CD4-positive, alpha-beta memory T cell (primary cell): ENCODE measurements at regions of chr1 and their contacts with region 1.

Region 1: GRCh38 chr1:165597883-165598675 is 33.0 kb upstream of the MGST3 start:
- DNase-seq: peak; percentile 84 to 91 (median 86)
- H3K4me3 ChIP-seq: peak overlapping the region; percentile 59 to 71
- H3K4me3 Mint-ChIP-seq: peak overlapping the region; percentile 88 to 92 (median 90)
- H3K27ac ChIP-seq: peak overlapping the region; percentile 7
- H3K27ac Mint-ChIP-seq: peak overlapping the region; percentile 80 to 95 (median 91)
- H3K4me1 ChIP-seq: peaks cover 18% of the 10 kb centered on the region
- H3K4me1 Mint-ChIP-seq: peaks cover 18 to 30% (median 24%) of the 10 kb centered on the region in 4 donors
- H3K27me3 ChIP-seq: peaks cover 22% of the 10 kb centered on the region
- H3K27me3 Mint-ChIP-seq: peaks cover 17 to 30% of the 10 kb centered on the region in 2 donors

Region 2: GRCh38 chr1:165218731-165219130 is 379.3 kb before region 1 on chr1:
- CTCF ChIA-PET with region 1: no interaction called
- POLR2A ChIA-PET with region 1: no interaction called
- intact Hi-C with region 1: no loop called
- DNase-seq: no peak
- H3K4me3 ChIP-seq: no peak overlapping the region
- H3K4me3 Mint-ChIP-seq: no peak overlapping the region
- H3K27ac ChIP-seq: no peak overlapping the region
- H3K27ac Mint-ChIP-seq: no peak overlapping the region
- H3K4me1 ChIP-seq: no peaks in the 10 kb centered on the region
- H3K4me1 Mint-ChIP-seq: no peaks in the 10 kb centered on the region
- H3K27me3 ChIP-seq: peaks cover 6% of the 10 kb centered on the region
- H3K27me3 Mint-ChIP-seq: peaks cover 6 to 7% of the 10 kb centered on the region in 2 donors

Region 3: GRCh38 chr1:165367375-165367993 is 230.6 kb before region 1 on chr1:
- CTCF ChIA-PET with region 1: interaction called, 115 read pairs
- POLR2A ChIA-PET with region 1: interaction called, 3 read pairs
- intact Hi-C with region 1: loop called (anchors 1 kb)
- DNase-seq: peak; percentile 57 to 70 (median 63)
- H3K4me3 ChIP-seq: no peak overlapping the region
- H3K4me3 Mint-ChIP-seq: no peak overlapping the region
- H3K27ac ChIP-seq: no peak overlapping the region
- H3K27ac Mint-ChIP-seq: no peak overlapping the region
- H3K4me1 ChIP-seq: no peaks in the 10 kb centered on the region
- H3K4me1 Mint-ChIP-seq: peaks cover 0 to 10% (median 2%) of the 10 kb centered on the region in 4 donors
- H3K27me3 ChIP-seq: peaks cover 4% of the 10 kb centered on the region
- H3K27me3 Mint-ChIP-seq: peaks cover 38 to 48% of the 10 kb centered on the region in 2 donors

Region 4: DNA sequence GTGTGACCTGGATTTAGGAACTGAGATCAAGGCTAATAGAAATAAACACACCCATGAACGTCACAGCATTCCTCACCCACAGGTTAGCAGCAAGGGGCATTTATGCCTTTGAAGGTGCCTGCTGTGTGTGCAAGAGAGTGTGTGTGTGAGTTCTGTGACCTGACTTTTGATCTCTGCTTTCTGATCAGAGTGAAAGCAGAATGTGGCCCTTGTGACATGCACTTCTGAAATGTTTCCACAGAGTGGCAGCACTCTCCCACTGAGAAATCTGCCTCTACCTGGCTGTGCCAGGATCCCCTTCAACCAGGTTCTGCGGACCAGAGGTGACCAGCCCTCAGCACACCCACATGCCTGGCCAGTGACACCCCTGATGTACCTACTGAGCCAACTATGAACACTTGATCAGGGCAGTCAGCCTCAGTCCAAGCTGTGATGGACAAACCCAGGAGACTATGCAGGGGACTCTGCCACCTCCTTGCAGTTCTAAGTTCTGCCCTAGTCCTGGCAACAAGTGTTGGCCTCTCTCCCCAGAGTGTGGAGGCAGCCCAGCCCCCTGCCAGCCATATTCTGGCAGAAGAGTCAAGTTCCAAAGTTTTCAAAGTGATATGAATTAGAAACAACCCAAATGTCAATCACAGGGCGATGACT is 194.1 kb before region 1 on chr1:
- CTCF ChIA-PET with region 1: interaction called, 21 read pairs
- POLR2A ChIA-PET with region 1: interaction called, 7 read pairs
- intact Hi-C with region 1: no loop called
- DNase-seq: peak in 3 of 5 donors; percentile 26 to 33 (median 30)
- H3K4me3 ChIP-seq: no peak overlapping the region
- H3K4me3 Mint-ChIP-seq: no peak overlapping the region
- H3K27ac ChIP-seq: no peak overlapping the region
- H3K27ac Mint-ChIP-seq: no peak overlapping the region
- H3K4me1 ChIP-seq: no peaks in the 10 kb centered on the region
- H3K4me1 Mint-ChIP-seq: peaks cover 0 to 5% (median 2%) of the 10 kb centered on the region in 4 donors
- H3K27me3 ChIP-seq: no peaks in the 10 kb centered on the region
- H3K27me3 Mint-ChIP-seq: peaks cover 15 to 17% of the 10 kb centered on the region in 2 donors

Region 5: DNA sequence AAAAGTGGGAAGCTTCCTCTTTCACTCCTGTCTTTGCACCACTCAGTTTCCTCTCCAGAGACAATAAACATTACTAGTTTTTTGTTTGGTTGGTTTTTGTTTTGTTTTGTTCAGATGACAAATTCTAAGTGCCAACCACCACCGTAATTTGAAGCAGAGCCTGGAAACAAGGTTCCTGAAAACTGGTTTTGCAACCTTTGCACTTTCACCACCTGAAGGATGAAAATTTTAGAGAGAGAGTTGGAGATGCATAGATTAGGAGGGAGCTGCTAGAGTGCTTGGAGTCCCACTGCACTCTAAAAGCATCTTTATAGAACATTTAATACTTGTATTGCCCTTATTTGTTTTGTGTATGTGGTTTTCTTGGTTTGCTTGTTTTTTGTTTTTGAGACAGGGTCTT is 12.8 kb after region 1 on chr1:
- CTCF ChIA-PET with region 1: interaction called, 13 read pairs
- POLR2A ChIA-PET with region 1: no interaction called
- intact Hi-C with region 1: no loop called
- DNase-seq: no peak
- H3K4me3 ChIP-seq: no peak overlapping the region
- H3K4me3 Mint-ChIP-seq: no peak overlapping the region
- H3K27ac ChIP-seq: no peak overlapping the region
- H3K27ac Mint-ChIP-seq: no peak overlapping the region
- H3K4me1 ChIP-seq: no peaks in the 10 kb centered on the region
- H3K4me1 Mint-ChIP-seq: no peaks in the 10 kb centered on the region
- H3K27me3 ChIP-seq: no peaks in the 10 kb centered on the region
- H3K27me3 Mint-ChIP-seq: peaks cover 22 to 23% of the 10 kb centered on the region in 2 donors

Region 6: DNA sequence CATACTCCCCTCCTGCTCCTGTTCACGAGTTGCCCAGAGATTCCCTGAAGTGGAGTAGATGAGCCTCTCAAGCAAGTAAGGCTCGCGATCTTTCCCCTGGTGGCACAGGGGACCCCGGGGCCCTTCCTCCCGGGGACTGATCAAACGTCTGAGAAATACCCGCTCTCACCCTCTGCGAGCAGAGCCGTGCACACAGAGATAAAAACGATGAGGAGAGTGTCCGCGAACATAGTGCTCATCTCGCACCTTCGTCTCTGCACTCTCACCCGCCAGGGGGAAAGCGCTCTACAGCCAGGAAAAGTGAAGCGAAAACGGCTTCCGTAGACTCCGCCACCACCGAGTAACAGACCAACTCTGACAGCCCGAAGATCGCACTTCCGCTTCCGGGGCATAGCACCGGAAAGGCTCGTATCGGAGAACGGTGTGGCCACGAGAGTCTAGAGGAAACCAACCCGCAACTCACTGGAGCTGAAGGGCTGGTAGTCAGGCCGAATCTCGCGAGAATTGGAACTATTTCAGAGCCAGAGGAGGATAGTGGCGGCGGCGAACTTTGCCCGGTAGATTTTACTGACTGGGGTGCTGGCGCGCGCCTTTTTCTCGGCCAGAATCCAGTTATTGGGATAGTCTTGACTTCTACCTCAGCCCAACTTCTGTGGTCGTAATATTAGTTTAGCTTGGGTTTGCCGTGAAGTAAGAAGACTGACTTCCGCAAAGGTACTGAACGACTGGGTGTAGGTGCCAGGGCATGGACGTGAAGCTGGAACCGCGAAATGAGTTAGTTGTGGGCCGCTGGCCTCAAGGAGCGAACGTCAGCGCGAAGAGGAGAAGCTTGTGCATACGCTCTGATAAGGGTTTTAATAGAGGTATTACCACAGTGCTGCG is 170.7 kb after region 1 on chr1 and contains the start of gene TMCO1:
- CTCF ChIA-PET with region 1: interaction called, 22 read pairs
- POLR2A ChIA-PET with region 1: interaction called, 10 read pairs
- intact Hi-C with region 1: no loop called
- DNase-seq: peak; percentile 93 to 98 (median 97)
- H3K4me3 ChIP-seq: peak within 1 kb of the TSS; percentile 68 to 69
- H3K4me3 Mint-ChIP-seq: peak within 1 kb of the TSS; percentile 94 to 99 (median 98)
- H3K27ac ChIP-seq: peak within 1 kb of the TSS; percentile 88
- H3K27ac Mint-ChIP-seq: peak within 1 kb of the TSS; percentile 96 to 100 (median 98)
- H3K4me1 ChIP-seq: peaks cover 60% of the 10 kb centered on the region
- H3K4me1 Mint-ChIP-seq: peaks cover 44 to 72% (median 59%) of the 10 kb centered on the region in 4 donors
- H3K27me3 ChIP-seq: no peaks in the 10 kb centered on the region
- H3K27me3 Mint-ChIP-seq: no peaks in the 10 kb centered on the region
- total RNA-seq, gene TMCO1: 63.7 to 67.3 TPM

Region 7: GRCh38 chr1:165914136-165914798 is 316.2 kb after region 1 on chr1:
- CTCF ChIA-PET with region 1: interaction called, 321 read pairs
- POLR2A ChIA-PET with region 1: interaction called, 7 read pairs
- intact Hi-C with region 1: no loop called
- DNase-seq: peak; percentile 61 to 71 (median 67)
- H3K4me3 ChIP-seq: no peak overlapping the region
- H3K4me3 Mint-ChIP-seq: no peak overlapping the region
- H3K27ac ChIP-seq: no peak overlapping the region
- H3K27ac Mint-ChIP-seq: peak overlapping the region in 1 of 7 donors; percentile 31
- H3K4me1 ChIP-seq: no peaks in the 10 kb centered on the region
- H3K4me1 Mint-ChIP-seq: peaks cover 0 to 4% (median 3%) of the 10 kb centered on the region in 4 donors
- H3K27me3 ChIP-seq: no peaks in the 10 kb centered on the region
- H3K27me3 Mint-ChIP-seq: no peaks in the 10 kb centered on the region